ENCODE measurements at regions of chr21 and their contacts with region 1.

Region 1: DNA sequence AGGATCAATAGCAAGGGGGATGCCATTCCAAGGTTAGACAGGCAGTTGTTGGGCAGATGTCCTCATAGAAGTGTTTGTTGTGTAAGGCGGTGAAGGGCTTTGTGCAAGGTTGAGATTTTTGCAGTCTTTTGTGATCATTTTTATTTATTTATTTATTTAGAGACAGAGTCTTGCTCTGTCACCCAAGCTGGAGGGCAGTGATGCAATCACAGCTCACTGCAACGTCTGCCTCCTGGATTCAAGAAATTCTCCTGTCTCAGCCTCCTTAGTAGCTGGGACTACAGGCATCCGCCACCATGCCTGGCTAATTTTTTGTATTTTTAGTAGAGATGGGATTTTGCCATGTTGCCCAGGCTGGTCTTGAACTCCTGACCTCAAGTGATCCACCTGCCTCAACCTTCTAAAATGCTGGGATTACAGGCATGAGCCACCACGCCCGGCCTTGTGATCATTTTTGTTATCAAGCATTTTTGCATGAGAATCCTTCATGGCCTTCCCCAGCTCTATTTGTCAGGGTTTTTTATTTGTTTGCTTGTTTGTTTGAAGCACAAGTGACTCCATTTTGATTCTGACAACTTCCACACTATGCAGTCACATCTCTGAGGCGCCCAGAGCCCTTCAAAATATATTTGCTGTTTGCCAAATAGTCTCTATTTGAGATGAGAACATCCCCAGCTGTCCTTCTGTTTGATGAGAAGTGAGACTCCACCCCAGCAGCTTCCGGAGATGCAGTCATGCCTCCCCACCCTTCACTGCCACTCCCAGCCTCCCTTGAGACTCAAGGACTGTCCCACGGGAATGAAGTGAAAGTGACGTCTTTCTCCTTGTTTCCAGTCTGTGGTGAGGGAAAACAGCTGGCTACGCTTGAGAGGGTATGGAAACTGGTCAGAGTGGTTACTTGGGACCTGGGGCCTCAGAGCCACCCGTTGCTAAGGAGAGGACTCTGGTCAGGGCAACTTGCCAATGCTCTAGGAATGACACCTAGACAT is 38.0 kb downstream of the TMEM50B start:
- DNase-seq: no peak
- H3K4me3 Mint-ChIP-seq: no peak overlapping the region
- H3K27ac Mint-ChIP-seq: no peak overlapping the region
- H3K4me1 Mint-ChIP-seq: peaks cover 3% of the 10 kb centered on the region
- H3K27me3 Mint-ChIP-seq: no peaks in the 10 kb centered on the region

Region 2: GRCh38 chr21:33360881-33361602 is 80.7 kb before region 1 on chr21:
- intact Hi-C with region 1: loop called (anchors 1 kb)
- DNase-seq: peak; percentile 73
- H3K4me3 Mint-ChIP-seq: peak overlapping the region; percentile 67
- H3K27ac Mint-ChIP-seq: peak overlapping the region; percentile 66
- H3K4me1 Mint-ChIP-seq: peaks cover 18% of the 10 kb centered on the region
- H3K27me3 Mint-ChIP-seq: no peaks in the 10 kb centered on the region

Measured in activated T-helper 2 cell treated with anti-CD3 and anti-CD28 coated beads, Interferon-gamma antibody, Interleukin-2, Interleukin-4, amounts not matched to agents 10 μg/mL and 5 μg/mL and 100 μg/mL, durations not matched to agents 14 hours and 24 hours and 36 hours (primary cell).